Naive thymus-derived CD4-positive, alpha-beta T cell (primary cell): ENCODE measurements at regions of chr1 and their contacts with region 1.

Region 1: GRCh38 chr1:2255420-2256369 is 27.6 kb downstream of the SKI start:
- DNase-seq: peak; percentile 59 to 99 (median 95)
- ATAC-seq: peak; percentile 79
- H3K4me3 ChIP-seq: peak overlapping the region; percentile 0
- H3K4me3 Mint-ChIP-seq: no peak overlapping the region
- H3K27ac ChIP-seq: peak overlapping the region; percentile 98
- H3K27ac Mint-ChIP-seq: no peak overlapping the region
- H3K4me1 ChIP-seq: peaks cover 52 to 70% of the 10 kb centered on the region in 2 donors
- H3K4me1 Mint-ChIP-seq: peaks cover 27 to 62% (median 51%) of the 10 kb centered on the region in 7 donors
- H3K27me3 ChIP-seq: no peaks in the 10 kb centered on the region
- H3K27me3 Mint-ChIP-seq: no peaks in the 10 kb centered on the region

Region 2: DNA sequence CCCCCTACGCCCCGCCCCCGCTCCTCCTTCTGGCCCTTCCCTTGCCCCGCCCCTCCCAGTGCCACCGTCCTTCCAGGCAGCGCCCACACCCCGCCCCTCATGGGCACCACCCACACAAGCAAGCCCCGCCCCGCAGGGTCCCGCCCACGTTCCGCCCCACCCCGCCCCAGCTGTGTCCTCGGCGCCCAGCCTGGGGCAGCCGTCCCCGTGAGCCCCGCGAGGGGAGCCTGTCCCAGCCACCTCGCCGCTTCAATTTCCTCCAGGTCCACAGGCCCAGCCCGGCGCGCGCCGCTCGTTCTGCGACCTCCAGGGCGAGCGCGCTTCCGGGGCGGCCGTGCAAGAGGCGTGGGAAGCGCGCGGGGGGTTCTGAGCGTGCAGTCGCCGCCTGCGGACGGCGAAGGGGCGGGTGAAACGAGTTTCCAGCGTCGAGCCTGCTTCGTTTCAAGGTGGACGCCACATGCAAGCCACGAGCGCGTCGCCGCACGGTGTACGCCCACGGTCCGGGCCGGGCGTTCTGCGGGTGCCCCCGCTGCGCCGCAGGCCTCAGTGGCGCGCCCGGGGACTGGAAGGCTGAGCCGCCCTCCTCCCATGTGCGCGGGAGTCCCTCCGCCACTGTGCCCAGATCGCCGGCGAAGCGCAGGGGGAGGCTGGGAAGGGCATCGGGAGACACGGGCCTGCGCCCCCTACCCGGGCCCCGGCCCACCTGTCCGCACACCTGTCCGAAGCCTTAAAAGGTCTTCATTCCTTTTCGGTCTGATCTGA is 50.3 kb before region 1 on chr1:
- CTCF ChIA-PET with region 1: interaction called, 4 read pairs
- POLR2A ChIA-PET with region 1: interaction called, 13 read pairs
- intact Hi-C with region 1: loop called in 1 of 2 experiments (anchors 2 kb)
- DNase-seq: peak; percentile 86 to 94 (median 93)
- ATAC-seq: peak; percentile 98
- H3K4me3 ChIP-seq: peak overlapping the region; percentile 70
- H3K4me3 Mint-ChIP-seq: peak overlapping the region; percentile 53 to 79 (median 68)
- H3K27ac ChIP-seq: peak overlapping the region; percentile 60
- H3K27ac Mint-ChIP-seq: peak overlapping the region in 5 of 9 donors; percentile 17 to 65 (median 56)
- H3K4me1 ChIP-seq: peaks cover 0 to 6% of the 10 kb centered on the region in 2 donors
- H3K4me1 Mint-ChIP-seq: peaks cover 0 to 9% (median 4%) of the 10 kb centered on the region in 7 donors
- H3K27me3 ChIP-seq: no peaks in the 10 kb centered on the region
- H3K27me3 Mint-ChIP-seq: peaks cover 0 to 4% (median 0%) of the 10 kb centered on the region in 5 donors

Region 3: DNA sequence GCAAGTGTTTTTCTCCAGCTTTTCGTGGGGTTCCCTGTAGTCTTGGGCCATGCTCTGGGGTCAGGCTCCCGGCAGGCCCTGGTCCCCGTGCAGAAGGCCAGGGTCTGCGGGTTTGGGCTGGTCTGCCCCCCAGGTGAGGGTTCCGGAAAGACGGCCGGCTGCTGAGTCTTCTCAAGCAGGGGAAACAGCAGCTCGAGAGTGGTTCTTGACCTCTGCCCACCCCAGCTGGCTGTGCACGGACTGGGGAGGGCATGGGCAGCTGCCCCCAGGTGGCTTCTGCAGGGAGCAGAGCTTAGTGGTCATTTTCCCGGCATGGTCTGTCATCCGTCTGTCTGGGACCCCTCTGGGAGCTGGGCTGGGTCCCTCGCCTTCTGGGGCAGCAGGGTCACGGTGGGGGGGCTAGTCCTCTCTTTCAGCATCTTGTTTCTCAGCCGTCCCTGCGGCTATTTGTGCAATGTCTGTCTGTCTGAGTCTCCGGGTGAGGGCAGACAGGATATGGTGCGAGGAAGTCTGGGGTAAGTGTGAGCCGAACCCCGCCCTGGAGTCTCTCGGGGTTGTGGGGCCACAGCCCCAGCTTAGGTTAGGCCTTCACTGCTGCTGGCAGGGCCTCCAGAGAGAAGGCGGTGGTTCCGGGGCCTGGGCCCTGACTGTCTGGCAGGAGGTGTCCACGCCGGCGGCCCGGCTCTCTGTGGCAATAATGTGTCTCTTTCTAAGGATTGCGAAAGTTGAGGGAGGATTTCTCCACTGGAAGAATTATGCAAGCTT is 21.5 kb before region 1 on chr1:
- CTCF ChIA-PET with region 1: interaction called, 16 read pairs
- POLR2A ChIA-PET with region 1: interaction called, 244 read pairs
- intact Hi-C with region 1: loop called (anchors 1 kb)
- DNase-seq: peak; percentile 52 to 82 (median 72)
- ATAC-seq: peak; percentile 80
- H3K4me3 ChIP-seq: peak overlapping the region; percentile 83
- H3K4me3 Mint-ChIP-seq: peak overlapping the region; percentile 89 to 100 (median 94)
- H3K27ac ChIP-seq: peak overlapping the region; percentile 78
- H3K27ac Mint-ChIP-seq: peak overlapping the region; percentile 90 to 99 (median 97)
- H3K4me1 ChIP-seq: peaks cover 64 to 78% of the 10 kb centered on the region in 2 donors
- H3K4me1 Mint-ChIP-seq: peaks cover 50 to 70% (median 61%) of the 10 kb centered on the region in 7 donors
- H3K27me3 ChIP-seq: no peaks in the 10 kb centered on the region
- H3K27me3 Mint-ChIP-seq: no peaks in the 10 kb centered on the region

Region 4: GRCh38 chr1:2275796-2276536 is 20.3 kb after region 1 on chr1:
- CTCF ChIA-PET with region 1: interaction called, 4 read pairs
- POLR2A ChIA-PET with region 1: interaction called, 6 read pairs
- intact Hi-C with region 1: loop called in 1 of 2 experiments (anchors 2 kb)
- DNase-seq: no peak
- ATAC-seq: peak; percentile 10
- H3K4me3 ChIP-seq: no peak overlapping the region
- H3K4me3 Mint-ChIP-seq: peak overlapping the region in 7 of 10 donors; percentile 9 to 69 (median 55)
- H3K27ac ChIP-seq: peak overlapping the region; percentile 63
- H3K27ac Mint-ChIP-seq: peak overlapping the region; percentile 42 to 89 (median 77)
- H3K4me1 ChIP-seq: peaks cover 6 to 67% of the 10 kb centered on the region in 2 donors
- H3K4me1 Mint-ChIP-seq: peaks cover 14 to 78% (median 41%) of the 10 kb centered on the region in 7 donors
- H3K27me3 ChIP-seq: no peaks in the 10 kb centered on the region
- H3K27me3 Mint-ChIP-seq: no peaks in the 10 kb centered on the region

Region 5: DNA sequence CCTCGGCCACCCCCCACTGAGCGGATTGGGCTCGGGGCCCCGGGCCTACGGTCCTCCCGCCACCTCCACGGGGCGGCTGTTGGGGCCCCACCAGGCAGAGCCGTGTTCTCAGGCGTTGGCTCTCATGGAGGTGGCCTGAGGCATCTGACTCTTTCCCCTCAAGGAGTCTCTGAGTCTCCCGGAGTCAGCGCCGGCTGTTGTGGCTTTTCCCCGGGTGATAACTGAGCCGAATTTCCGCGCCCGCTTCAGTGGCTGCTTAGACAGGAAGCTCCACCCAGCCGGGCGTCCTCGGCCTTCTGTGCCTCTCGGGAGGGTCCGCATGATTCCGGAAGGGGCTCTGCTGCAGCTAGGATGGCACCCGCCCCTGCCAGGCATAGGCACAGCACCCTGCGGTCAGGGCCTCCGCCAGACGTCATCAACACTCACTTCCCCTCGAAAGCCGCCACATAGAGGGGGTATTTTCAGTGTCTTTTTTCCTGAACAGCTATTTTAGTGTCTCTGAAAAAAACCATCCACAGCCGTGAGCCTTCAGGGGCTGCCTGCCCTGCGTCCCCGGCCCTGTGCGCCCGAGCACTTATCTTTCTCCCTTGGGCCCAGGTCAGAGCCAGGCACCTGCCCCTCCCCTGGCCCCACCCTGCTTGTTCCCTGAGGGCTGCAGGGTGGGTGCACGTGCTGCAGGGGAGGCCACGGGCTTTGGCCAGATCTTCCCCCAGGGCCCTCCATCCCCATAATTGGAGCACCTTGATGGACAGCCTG is 45.3 kb after region 1 on chr1:
- CTCF ChIA-PET with region 1: interaction called, 4 read pairs
- POLR2A ChIA-PET with region 1: interaction called, 10 read pairs
- intact Hi-C with region 1: loop called (anchors 1 kb)
- DNase-seq: peak; percentile 69 to 98 (median 97)
- ATAC-seq: peak; percentile 90
- H3K4me3 ChIP-seq: peak overlapping the region; percentile 77
- H3K4me3 Mint-ChIP-seq: peak overlapping the region; percentile 79 to 89 (median 85)
- H3K27ac ChIP-seq: peak overlapping the region; percentile 98
- H3K27ac Mint-ChIP-seq: peak overlapping the region; percentile 91 to 99 (median 99)
- H3K4me1 ChIP-seq: peaks cover 36 to 54% of the 10 kb centered on the region in 2 donors
- H3K4me1 Mint-ChIP-seq: peaks cover 14 to 72% (median 42%) of the 10 kb centered on the region in 7 donors
- H3K27me3 ChIP-seq: no peaks in the 10 kb centered on the region
- H3K27me3 Mint-ChIP-seq: no peaks in the 10 kb centered on the region

Region 6: DNA sequence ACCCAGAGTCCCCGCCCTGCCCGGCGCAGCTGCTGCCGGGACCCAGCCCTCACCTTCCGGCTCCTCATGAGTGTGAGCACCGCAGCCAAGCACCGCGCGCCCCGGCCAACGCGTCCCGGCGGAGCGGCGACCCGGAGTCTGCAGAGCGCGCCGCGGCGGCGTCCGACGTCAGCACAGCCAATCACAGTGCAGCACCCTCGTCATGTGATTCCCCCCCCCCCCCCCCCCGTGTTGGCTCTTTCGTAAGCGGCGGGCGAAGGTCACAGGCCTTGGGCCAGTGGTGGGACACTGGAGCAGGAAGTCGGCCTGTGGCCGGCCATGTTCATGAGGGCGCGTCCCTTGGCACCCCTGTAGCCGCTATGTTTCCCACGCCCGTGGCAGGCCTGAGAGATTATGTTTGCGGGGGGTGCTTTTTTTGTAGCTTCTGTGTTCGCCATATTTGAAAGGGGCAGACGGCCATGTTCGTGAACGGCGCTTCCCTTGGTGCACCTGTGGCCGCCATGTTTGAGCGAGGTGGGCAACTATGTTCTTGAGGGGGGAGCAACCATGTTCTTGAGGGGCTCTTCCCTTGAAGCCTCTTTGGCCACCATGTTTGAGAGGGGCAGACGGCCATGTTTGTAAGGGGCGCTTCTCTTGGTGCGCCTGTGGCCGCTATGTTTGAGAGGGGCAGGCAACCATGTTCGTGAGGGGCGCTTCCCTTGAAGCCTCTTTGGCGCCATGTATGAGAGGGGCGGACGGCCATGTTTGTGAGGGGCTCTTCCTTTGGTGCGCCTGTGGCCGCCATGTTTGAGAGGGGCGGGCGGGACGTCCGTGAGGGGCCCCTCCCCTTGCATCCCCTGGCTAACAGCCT is 1644.6 kb after region 1 on chr1 and contains the start of gene C1orf174:
- CTCF ChIA-PET with region 1: no interaction called
- POLR2A ChIA-PET with region 1: no interaction called
- intact Hi-C with region 1: loop called in 1 of 2 experiments (anchors 5 kb)
- DNase-seq: peak; percentile 78 to 99 (median 96)
- ATAC-seq: peak; percentile 88
- H3K4me3 ChIP-seq: peak within 1 kb of the TSS; percentile 79
- H3K4me3 Mint-ChIP-seq: peak within 1 kb of the TSS; percentile 90 to 96 (median 94)
- H3K27ac ChIP-seq: peak within 1 kb of the TSS; percentile 94
- H3K27ac Mint-ChIP-seq: peak within 1 kb of the TSS; percentile 92 to 99 (median 96)
- H3K4me1 ChIP-seq: peaks cover 6 to 39% of the 10 kb centered on the region in 2 donors
- H3K4me1 Mint-ChIP-seq: peaks cover 23 to 71% (median 53%) of the 10 kb centered on the region in 7 donors
- H3K27me3 ChIP-seq: no peaks in the 10 kb centered on the region
- H3K27me3 Mint-ChIP-seq: no peaks in the 10 kb centered on the region
- total RNA-seq, gene C1orf174: 17.0 to 33.6 (median 27.1) TPM